ENCODE measurements at regions of chr9 and their contacts with region 1.

Region 1: DNA sequence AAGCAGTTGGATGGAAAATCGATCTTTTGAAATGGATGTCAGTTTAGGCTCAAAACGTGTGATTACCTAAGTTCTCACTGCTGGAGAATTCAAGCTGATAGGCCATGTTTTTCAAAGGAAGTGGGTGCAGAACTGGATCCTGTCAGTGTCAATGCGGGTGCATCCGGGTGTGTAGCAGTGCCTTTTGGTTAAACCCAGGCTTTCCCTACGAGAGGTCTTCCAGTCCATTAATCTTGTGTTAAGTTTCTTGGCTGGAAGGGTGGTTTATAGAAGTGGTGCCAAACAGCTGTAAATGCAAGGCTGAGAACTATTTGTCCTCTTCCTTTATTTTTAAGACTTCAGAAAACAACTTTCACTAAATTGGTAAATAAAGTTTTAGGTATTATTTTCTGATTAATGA is 71.9 kb downstream of the DAPK1 start:
- DNase-seq: no peak
- ATAC-seq: no peak
- H3K4me3 ChIP-seq: no peak overlapping the region
- H3K4me3 Mint-ChIP-seq: no peak overlapping the region
- H3K27ac ChIP-seq: no peak overlapping the region
- H3K27ac Mint-ChIP-seq: no peak overlapping the region
- H3K4me1 ChIP-seq: peaks cover 0 to 4% of the 10 kb centered on the region in 2 experiments
- H3K4me1 Mint-ChIP-seq: no peaks in the 10 kb centered on the region
- H3K27me3 ChIP-seq: no peaks in the 10 kb centered on the region
- H3K27me3 Mint-ChIP-seq: peaks cover 0 to 4% of the 10 kb centered on the region in 2 donors

Region 2: GRCh38 chr9:87640385-87640795 is 70.9 kb after region 1 on chr9:
- CTCF ChIA-PET with region 1: no interaction called
- POLR2A ChIA-PET with region 1: no interaction called
- DNase-seq: no peak
- ATAC-seq: no peak
- H3K4me3 ChIP-seq: no peak overlapping the region
- H3K4me3 Mint-ChIP-seq: no peak overlapping the region
- H3K27ac ChIP-seq: no peak overlapping the region
- H3K27ac Mint-ChIP-seq: no peak overlapping the region
- H3K4me1 ChIP-seq: peaks cover 0 to 7% of the 10 kb centered on the region in 2 experiments
- H3K4me1 Mint-ChIP-seq: peaks cover 0 to 4% (median 0%) of the 10 kb centered on the region in 3 donors
- H3K27me3 ChIP-seq: peaks cover 0 to 3% of the 10 kb centered on the region in 2 experiments
- H3K27me3 Mint-ChIP-seq: no peaks in the 10 kb centered on the region

Region 3: GRCh38 chr9:88697764-88698432 is 1128.4 kb after region 1 on chr9:
- CTCF ChIA-PET with region 1: interaction called in 1 of 2 experiments, 11 read pairs
- POLR2A ChIA-PET with region 1: no interaction called
- DNase-seq: no peak
- ATAC-seq: no peak
- H3K4me3 ChIP-seq: no peak overlapping the region
- H3K4me3 Mint-ChIP-seq: no peak overlapping the region
- H3K27ac ChIP-seq: no peak overlapping the region
- H3K27ac Mint-ChIP-seq: no peak overlapping the region
- H3K4me1 ChIP-seq: no peaks in the 10 kb centered on the region
- H3K4me1 Mint-ChIP-seq: no peaks in the 10 kb centered on the region
- H3K27me3 ChIP-seq: peaks cover 0 to 16% of the 10 kb centered on the region in 2 experiments
- H3K27me3 Mint-ChIP-seq: peaks cover 14 to 31% of the 10 kb centered on the region in 2 donors